CD8-positive, alpha-beta memory T cell (primary cell): ENCODE measurements at regions of chr6 and their contacts with region 1.

Region 1: DNA sequence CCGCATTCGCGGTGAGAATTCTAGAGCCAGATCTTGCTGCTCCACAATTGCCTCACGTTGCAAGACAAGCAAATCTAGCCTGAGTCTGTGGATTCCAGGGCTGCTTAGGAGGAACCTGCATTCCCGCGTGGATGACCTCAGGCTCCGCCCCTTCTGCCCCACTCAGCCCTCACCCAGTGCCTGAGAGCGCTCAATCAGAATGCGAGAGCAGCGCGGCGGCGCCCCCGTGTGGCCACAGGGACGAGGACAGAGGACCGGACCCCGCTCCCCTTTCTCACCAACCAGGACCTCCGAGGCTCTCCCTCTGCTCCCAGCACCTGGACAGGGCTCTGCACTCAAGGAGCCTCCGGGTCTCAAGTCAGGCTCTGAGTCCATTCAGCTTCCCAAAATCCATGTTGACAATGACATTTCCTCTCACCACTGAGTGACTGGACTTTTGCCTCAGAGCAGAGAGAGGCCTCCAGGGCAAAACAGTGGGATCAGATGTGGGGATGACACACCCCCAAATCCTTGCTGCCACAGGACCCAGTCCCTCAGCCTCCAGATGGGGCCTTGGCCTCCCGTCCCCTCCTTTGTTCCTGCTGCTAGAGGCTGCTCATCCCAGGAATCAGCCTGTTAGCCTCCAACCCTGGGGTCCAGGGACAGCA is 52.0 kb downstream of the RPP21 start:
- DNase-seq: peak; percentile 69 to 88 (median 80)
- H3K4me3 ChIP-seq: no peak overlapping the region
- H3K4me3 Mint-ChIP-seq: peak overlapping the region in 1 of 7 donors; percentile 59
- H3K27ac ChIP-seq: no peak overlapping the region
- H3K27ac Mint-ChIP-seq: no peak overlapping the region
- H3K4me1 ChIP-seq: no peaks in the 10 kb centered on the region
- H3K4me1 Mint-ChIP-seq: peaks cover 0 to 4% (median 0%) of the 10 kb centered on the region in 3 donors
- H3K27me3 ChIP-seq: peaks cover 16% of the 10 kb centered on the region
- H3K27me3 Mint-ChIP-seq: peaks cover 18 to 45% of the 10 kb centered on the region in 2 donors

Region 2: GRCh38 chr6:30219244-30219643 is 177.7 kb before region 1 on chr6:
- CTCF ChIA-PET with region 1: interaction called, 21 read pairs
- POLR2A ChIA-PET with region 1: no interaction called
- DNase-seq: peak in 2 of 5 donors; percentile 27 to 43
- H3K4me3 ChIP-seq: no peak overlapping the region
- H3K4me3 Mint-ChIP-seq: peak overlapping the region in 2 of 7 donors; percentile 9 to 22
- H3K27ac ChIP-seq: no peak overlapping the region
- H3K27ac Mint-ChIP-seq: peak overlapping the region in 1 of 8 donors; percentile 79
- H3K4me1 ChIP-seq: peaks cover 4% of the 10 kb centered on the region
- H3K4me1 Mint-ChIP-seq: peaks cover 15 to 22% (median 18%) of the 10 kb centered on the region in 3 donors
- H3K27me3 ChIP-seq: no peaks in the 10 kb centered on the region
- H3K27me3 Mint-ChIP-seq: peaks cover 0 to 3% of the 10 kb centered on the region in 2 donors

Region 3: GRCh38 chr6:30357678-30358540 is 39.0 kb before region 1 on chr6:
- CTCF ChIA-PET with region 1: interaction called, 10 read pairs
- POLR2A ChIA-PET with region 1: no interaction called
- DNase-seq: peak; percentile 29 to 66 (median 47)
- H3K4me3 ChIP-seq: peak overlapping the region; percentile 66
- H3K4me3 Mint-ChIP-seq: peak overlapping the region; percentile 63 to 93 (median 86)
- H3K27ac ChIP-seq: no peak overlapping the region
- H3K27ac Mint-ChIP-seq: peak overlapping the region in 1 of 8 donors; percentile 66
- H3K4me1 ChIP-seq: peaks cover 5% of the 10 kb centered on the region
- H3K4me1 Mint-ChIP-seq: peaks cover 7 to 10% (median 10%) of the 10 kb centered on the region in 3 donors
- H3K27me3 ChIP-seq: peaks cover 48% of the 10 kb centered on the region
- H3K27me3 Mint-ChIP-seq: peaks cover 31 to 76% of the 10 kb centered on the region in 2 donors